AG04450 (cell line): ENCODE measurements at regions of chr12 and their contacts with region 1.

Region 1: DNA sequence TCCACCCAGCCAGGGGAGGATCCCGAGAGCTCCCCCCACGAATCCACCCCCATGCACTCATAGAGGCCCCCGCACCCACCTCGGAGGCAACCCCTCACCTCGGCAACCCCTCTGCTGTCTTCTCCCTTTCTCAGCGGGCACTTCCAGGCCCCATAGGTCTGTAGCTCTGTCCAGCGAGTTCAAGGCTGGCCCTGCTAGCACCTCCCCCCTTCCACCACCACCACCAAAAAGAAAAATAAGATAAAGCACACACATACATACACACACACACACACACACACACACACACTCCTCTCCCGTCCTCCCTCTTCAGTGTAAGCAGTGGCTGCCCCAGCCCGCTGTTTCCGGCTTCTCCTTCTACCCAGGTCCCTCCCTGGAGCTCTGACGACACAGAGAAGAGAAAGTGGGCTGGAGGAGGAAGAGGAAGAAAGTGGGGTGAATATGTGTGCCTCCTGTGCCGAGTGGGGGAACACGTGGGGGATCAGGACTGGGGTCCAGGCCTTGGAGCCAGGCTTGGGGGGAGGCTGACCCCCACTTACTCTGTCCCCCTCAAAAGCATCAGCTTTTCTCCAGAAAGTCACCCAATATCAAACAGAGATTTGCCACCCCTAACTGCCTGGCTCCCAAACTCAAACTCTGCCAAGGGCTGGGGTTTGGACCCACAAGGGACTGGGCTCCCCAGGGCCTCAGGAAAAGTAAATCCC is at the start of gene STAT6:
- DNase-seq: no peak
- H3K4me3 ChIP-seq: peak within 1 kb of the TSS; percentile 87
- H3K27ac ChIP-seq: peak within 1 kb of the TSS; percentile 99
- H3K27me3 ChIP-seq: no peaks in the 10 kb centered on the region
- CTCF ChIP-seq: no peak
- polyA plus RNA-seq, gene STAT6: 79.5 and 94.2 TPM in 2 replicates

Region 2: DNA sequence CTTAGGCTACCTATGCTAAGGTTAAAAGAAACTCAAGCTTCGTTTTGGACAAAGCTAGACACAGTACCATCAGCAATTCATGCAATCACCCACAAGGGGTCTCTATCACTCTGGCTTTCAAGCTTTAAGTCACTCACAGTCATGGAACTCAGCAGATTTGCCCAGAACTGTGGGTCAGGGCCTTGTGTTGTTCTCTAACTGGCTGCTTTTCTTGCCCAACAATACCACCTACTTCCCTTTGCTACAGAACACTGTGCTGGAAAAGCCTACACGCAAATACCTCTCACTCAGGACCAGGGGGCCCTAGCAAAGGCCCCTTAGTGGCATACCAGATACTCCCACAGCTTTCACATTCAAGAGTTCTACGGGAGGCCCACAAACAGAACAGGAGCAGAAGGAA is 41.7 kb before region 1 on chr12:
- CTCF ChIA-PET with region 1: interaction called, 47 read pairs
- POLR2A ChIA-PET with region 1: interaction called, 18 read pairs
- DNase-seq: peak; percentile 73
- H3K4me3 ChIP-seq: no peak overlapping the region
- H3K27ac ChIP-seq: no peak overlapping the region
- H3K27me3 ChIP-seq: no peaks in the 10 kb centered on the region
- CTCF ChIP-seq: peak; percentile 90

Region 3: DNA sequence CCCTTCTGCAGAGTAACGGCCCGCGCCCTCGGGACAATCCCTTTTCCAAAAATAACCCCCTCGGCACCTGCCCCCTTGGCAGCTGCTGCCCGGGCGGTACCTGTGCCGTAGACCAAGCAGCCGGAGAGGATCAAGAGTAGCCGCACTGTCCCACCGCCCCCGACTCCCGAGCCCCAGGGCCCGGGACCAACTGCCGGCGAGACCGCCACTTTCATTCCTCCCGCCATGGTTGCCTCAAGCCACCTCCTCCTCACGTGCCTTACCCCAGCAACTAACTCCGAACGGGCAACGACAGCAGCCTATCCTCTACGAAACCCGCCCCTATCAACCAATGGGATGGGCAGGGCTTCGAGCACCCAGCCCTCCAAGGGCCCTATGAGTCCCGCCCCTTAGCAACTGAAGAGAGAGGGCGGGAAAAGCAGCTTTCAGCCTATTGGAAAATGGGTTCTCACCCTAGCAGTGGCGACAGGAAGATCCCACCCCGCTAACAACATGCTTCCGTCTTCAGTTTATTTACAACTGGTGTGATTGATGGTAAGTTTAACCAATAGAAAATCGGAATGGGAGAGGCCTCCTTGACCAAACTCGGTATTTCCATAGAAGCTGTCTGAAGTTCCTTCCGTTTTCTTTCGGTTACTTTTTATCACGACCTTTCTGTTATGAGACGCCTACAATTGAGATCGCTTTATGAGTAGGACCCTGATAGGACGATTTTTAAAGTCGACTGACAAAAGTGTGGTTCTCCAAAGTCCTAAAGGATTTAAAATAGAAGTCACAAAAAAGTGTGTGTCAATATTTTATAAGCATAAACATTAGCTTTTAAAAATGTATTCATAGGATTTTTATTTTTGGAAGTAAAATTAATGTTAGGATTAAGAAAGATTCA is 32.4 kb before region 1 on chr12 and contains the start of gene NEMP1:
- CTCF ChIA-PET with region 1: interaction called, 39 read pairs
- POLR2A ChIA-PET with region 1: interaction called, 22 read pairs
- DNase-seq: peak; percentile 100
- H3K4me3 ChIP-seq: peak within 1 kb of the TSS; percentile 82
- H3K27ac ChIP-seq: peak within 1 kb of the TSS; percentile 65
- H3K27me3 ChIP-seq: no peaks in the 10 kb centered on the region
- CTCF ChIP-seq: no peak
- polyA plus RNA-seq, gene NEMP1: 8.3 and 11.9 TPM in 2 replicates

Region 4: GRCh38 chr12:57088459-57089248 is 22.5 kb before region 1 on chr12 and contains the start of gene NAB2:
- CTCF ChIA-PET with region 1: interaction called, 21 read pairs
- POLR2A ChIA-PET with region 1: interaction called, 258 read pairs
- DNase-seq: peak; percentile 94
- H3K4me3 ChIP-seq: peak within 1 kb of the TSS; percentile 76
- H3K27ac ChIP-seq: peak within 1 kb of the TSS; percentile 100
- H3K27me3 ChIP-seq: no peaks in the 10 kb centered on the region
- CTCF ChIP-seq: no peak
- polyA plus RNA-seq, gene NAB2: 46.4 and 60.9 TPM in 2 replicates

Region 5: GRCh38 chr12:57229634-57230380 is 118.6 kb after region 1 on chr12 and contains the start of gene SHMT2:
- CTCF ChIA-PET with region 1: no interaction called
- POLR2A ChIA-PET with region 1: interaction called, 10 read pairs
- DNase-seq: peak; percentile 92
- H3K4me3 ChIP-seq: peak within 1 kb of the TSS; percentile 87
- H3K27ac ChIP-seq: peak within 1 kb of the TSS; percentile 99
- H3K27me3 ChIP-seq: no peaks in the 10 kb centered on the region
- CTCF ChIP-seq: no peak
- polyA plus RNA-seq, gene SHMT2: 266 and 314 TPM in 2 replicates